ENCODE measurements at regions of chr10 and their contacts with region 1.

Region 1: DNA sequence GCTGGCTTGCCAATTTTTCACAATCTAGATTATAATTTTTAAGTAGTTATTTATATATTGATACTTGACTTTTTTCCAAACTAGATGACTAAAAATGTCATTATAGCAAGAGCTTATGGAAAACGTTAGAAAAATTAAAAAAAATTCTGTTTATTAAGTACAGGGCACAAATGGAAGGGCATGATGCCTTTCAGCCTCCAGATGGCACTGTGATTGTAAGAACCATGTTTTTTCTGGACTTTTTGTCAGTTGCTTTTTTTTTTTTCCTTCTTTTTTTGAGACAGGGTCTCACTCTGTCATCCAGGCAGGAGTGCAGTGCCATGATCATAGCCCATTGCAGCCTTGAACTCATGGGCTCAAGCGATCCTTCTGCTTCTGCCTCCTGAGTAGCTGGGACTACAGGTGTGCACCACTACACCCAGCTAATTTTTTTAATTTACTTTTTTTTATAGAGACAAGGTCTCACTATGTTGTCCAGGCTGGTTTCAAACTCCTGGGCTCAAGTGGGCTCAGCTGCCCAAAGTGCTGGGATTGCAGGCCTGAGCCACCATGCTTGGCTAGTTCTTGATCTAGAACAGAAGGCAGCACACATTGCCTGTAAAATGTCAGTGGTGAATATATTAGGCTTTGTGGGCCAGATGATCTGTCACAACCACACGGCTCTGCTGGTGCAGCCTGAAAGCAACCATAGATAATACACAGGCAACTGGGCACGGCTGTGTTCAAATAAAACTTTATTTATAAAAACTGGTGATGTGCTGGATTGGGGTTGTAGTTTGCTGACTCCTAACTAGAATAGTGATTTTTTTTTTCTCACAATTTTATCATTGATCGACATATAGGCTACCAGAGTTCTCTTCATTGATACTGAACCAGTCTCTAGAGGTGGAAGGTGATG is 27.4 kb downstream of the UCMA start:
- DNase-seq: peak; percentile 6
- ATAC-seq: no peak
- H3K4me3 ChIP-seq: no peak overlapping the region
- H3K27ac ChIP-seq: no peak overlapping the region
- H3K4me1 ChIP-seq: no peaks in the 10 kb centered on the region
- H3K27me3 ChIP-seq: no peaks in the 10 kb centered on the region
- CTCF ChIP-seq: peak; percentile 48
- EP300 ChIP-seq: no peak
- POLR2A ChIP-seq: no peak
- RAD21 ChIP-seq: no peak

Region 2: GRCh38 chr10:13074561-13075451 is 132.0 kb before region 1 on chr10:
- CTCF ChIA-PET with region 1: no interaction called
- POLR2A ChIA-PET with region 1: no interaction called
- in situ Hi-C with region 1: no loop called
- intact Hi-C with region 1: no loop called
- DNase-seq: peak; percentile 30
- ATAC-seq: peak; percentile 97
- H3K4me3 ChIP-seq: no peak overlapping the region
- H3K27ac ChIP-seq: no peak overlapping the region
- H3K4me1 ChIP-seq: peaks cover 3% of the 10 kb centered on the region; the same call in 1 of the 2 replicates
- H3K27me3 ChIP-seq: peaks cover 0 to 10% of the 10 kb centered on the region in 2 experiments; a peak in 2 of 5 replicates
- CTCF ChIP-seq: peak; percentile 86
- EP300 ChIP-seq: no peak
- POLR2A ChIP-seq: no peak
- RAD21 ChIP-seq: peak; percentile 70

Region 3: DNA sequence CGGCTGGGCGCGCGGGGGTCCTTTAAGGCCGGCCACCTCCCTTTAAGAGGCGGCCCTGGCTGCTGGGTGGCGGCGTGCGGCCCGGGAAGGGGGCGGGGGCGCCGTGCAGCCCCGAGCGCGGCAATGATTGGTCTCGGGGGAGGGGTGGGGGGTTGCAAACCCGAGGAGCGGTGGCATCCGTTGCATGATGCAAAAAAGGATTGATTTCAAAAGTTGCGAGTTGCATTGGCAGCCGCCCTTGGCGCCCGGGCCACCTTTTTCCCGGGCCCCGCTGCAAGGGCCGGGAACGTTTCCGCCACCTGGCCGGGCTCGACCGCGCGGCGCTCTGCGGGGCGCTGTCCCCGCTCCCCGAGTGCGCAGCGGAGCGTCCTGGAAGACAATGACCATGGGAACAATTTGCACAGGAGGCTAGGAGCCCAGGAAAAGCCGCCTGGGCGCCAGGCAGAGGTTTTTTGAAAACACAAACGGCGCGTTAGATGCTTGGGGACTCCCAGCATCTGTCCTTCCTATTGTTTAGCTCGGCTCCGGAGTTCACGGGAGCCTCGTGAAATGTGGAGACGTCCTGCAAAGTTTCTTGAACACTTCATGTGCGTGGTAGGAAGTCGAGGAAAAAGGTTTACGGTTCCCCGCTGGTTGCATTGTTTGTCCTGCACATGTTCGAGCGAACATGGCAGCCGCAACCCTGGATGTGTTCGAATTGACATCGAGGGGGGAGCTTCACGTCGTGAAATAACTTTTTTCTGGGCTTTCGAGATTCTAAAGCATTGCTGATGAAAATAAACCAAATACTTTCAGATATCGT is 141.6 kb after region 1 on chr10 and contains the start of gene SEPHS1:
- CTCF ChIA-PET with region 1: interaction called, 8 read pairs
- POLR2A ChIA-PET with region 1: interaction called, 3 read pairs
- in situ Hi-C with region 1: no loop called
- intact Hi-C with region 1: loop called (anchors 5 kb)
- DNase-seq: peak; percentile 75
- ATAC-seq: peak; percentile 76
- H3K4me3 ChIP-seq: peak within 1 kb of the TSS; percentile 79 to 96 (median 86)
- H3K27ac ChIP-seq: peak within 1 kb of the TSS; percentile 92
- H3K4me1 ChIP-seq: peaks cover 49% of the 10 kb centered on the region
- H3K27me3 ChIP-seq: no peaks in the 10 kb centered on the region; a peak in 1 of 5 replicates
- CTCF ChIP-seq: no peak; the same call in 1 of the 2 replicates
- EP300 ChIP-seq: no peak
- POLR2A ChIP-seq: peak; percentile 57 to 62; a peak in 3 of 4 replicates
- RAD21 ChIP-seq: no peak
- total RNA-seq, gene SEPHS1: 61.5 and 76.0 TPM in 2 replicates

Measured in HepG2 (cell line).